ENCODE measurements at regions of chr2 and their contacts with region 1.

Region 1: DNA sequence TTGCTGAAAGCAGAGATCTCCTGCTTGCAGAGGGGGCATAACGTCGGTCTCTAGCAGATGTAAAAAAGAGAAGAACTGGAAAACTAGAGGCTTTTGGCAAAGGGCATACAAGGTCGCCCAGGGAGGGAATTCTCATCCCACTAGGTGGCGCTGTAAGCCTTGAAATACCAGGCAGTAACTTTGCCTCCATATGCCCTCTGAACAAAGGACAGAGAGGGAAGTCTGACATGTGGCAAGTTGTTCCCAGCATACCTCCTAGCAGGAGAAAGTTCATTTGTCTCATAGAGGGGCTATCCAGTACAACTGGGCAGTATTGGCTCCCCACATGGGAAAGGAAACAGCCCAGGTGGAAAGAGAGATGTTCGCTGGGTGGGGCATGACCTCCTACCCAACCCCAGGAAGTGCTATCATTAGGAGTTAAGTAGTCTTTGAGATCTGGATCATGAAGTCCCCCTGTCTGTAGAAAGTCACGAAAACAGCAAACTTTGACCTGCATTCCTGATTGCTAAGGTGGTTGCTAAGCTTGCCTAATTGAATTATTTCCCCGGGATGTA is 39.9 kb downstream of the STK17B start:
- DNase-seq: no peak
- H3K4me3 ChIP-seq: no peak overlapping the region
- CTCF ChIP-seq: peak; percentile 20

Region 2: GRCh38 chr2:195687320-195688086 is 444.0 kb before region 1 on chr2:
- in situ Hi-C with region 1: no loop called
- DNase-seq: no peak
- H3K4me3 ChIP-seq: no peak overlapping the region
- CTCF ChIP-seq: no peak

Region 3: GRCh38 chr2:196096982-196097745 is 34.3 kb before region 1 on chr2:
- in situ Hi-C with region 1: no loop called
- DNase-seq: no peak
- H3K4me3 ChIP-seq: no peak overlapping the region
- CTCF ChIP-seq: no peak

Region 4: DNA sequence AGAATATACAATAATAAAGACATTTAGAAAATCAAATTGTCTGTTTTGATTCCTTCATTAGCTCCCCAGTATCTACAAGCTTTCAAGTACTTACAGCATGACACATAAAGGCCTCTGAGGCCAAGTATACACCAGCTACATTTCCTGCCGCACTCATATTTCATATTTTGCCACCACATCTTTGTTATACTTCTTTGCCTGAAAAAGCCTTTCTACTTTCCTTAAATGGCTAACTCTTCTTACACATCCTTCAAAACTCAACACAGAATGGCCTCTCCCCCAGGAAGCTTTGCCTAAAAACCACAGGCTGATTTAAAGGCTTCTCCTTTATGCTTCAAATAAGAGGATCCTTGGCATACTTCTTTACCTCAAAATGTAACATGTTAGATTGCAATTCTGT is 35.4 kb after region 1 on chr2:
- in situ Hi-C with region 1: loop called (anchors 5 kb)
- DNase-seq: peak; percentile 68
- H3K4me3 ChIP-seq: no peak overlapping the region
- CTCF ChIP-seq: no peak

Measured in astrocyte of the cerebellum (primary cell).